Activated naive CD4-positive, alpha-beta T cell treated with anti-CD3 and anti-CD28 coated beads, Interleukin-2, amount 10 ng/mL, durations not matched to agents 7 days and 5 days (primary cell): ENCODE measurements at regions of chr3 and their contacts with region 1.

Region 1: DNA sequence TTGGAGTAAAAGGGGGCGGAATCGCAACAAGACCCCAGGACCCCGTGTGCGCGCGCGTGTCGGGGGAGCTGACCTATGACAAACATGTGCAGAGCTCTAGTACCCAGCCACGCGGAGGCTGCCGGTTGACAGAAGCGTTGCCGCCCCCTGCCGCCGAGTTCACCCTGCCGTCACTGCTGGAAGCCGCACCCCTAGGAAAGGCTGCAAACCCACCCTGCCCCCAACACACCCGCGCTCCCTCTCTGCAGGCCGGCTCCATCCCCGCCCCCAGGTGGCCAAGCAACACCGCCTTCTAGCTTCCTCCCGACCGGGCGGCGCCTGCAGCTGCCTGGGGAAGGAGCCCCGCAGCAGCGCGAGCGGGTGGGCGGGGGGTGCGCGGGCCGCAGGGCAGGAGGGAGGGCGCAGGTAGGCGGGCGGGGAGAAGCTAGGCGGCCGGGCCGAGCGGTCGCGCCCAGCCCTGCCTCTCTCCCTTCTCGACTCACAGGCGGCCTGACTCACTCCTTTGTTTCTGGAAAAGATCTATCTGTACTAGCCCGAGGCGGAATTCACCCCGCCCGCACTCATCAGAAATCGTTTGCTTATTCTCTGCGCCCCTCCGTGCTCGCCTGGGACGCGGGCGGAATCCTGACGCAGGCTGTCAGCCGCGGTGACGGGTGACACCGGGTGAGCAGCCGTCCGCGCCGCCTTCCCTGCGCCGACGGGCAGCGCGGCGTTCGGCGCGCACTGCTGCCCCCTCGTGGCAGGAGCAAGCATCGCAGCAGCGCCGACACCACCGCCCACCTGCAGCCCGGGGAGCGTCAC is 160.8 kb downstream of the GAP43 start:
- DNase-seq: peak; percentile 95
- H3K4me3 Mint-ChIP-seq: peak overlapping the region; percentile 83
- H3K27ac Mint-ChIP-seq: peak overlapping the region; percentile 97
- H3K4me1 Mint-ChIP-seq: peaks cover 17% of the 10 kb centered on the region
- H3K27me3 Mint-ChIP-seq: peaks cover 13% of the 10 kb centered on the region

Region 2: DNA sequence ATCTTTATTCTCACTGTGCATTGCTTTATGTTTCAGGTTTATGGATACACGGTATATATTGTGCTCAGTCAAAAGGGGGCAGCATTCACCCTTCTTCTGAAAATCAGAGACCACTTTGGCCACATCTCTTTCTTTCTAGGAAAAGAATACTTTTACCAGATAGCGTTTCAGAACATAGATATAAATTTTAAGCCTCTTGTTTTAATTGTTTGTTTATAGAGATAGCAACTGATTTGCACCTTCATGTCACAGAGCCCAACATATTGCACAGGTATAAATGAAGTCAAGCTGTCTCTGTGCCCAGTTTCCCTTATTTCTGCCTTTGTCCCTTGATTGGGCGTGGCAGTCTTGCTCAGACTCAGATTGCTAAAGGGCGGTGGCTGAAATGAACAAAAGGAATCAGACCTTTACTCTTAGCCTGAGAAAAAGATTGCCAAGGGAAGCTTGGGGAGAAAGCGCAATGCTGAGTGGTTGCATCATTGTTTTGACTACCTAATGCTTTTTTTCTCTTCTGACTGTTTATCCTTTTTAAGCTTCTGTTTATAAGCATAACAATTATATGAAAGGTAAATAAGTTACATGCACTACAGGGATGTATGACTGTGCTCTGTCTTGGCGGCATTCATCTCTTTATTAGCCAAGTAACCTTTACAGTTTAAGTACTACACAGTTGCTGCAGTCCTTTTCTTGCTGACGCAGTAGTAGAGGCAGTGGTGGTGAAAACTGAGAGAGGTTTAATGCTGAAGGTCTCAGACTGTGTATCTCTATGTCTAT is 566.3 kb before region 1 on chr3:
- CTCF ChIA-PET with region 1: interaction called, 13 read pairs
- DNase-seq: no peak
- H3K4me3 Mint-ChIP-seq: no peak overlapping the region
- H3K27ac Mint-ChIP-seq: no peak overlapping the region
- H3K4me1 Mint-ChIP-seq: no peaks in the 10 kb centered on the region
- H3K27me3 Mint-ChIP-seq: no peaks in the 10 kb centered on the region

Region 3: GRCh38 chr3:115814778-115815380 is 30.7 kb after region 1 on chr3:
- CTCF ChIA-PET with region 1: interaction called, 26 read pairs
- DNase-seq: peak; percentile 75
- H3K4me3 Mint-ChIP-seq: no peak overlapping the region
- H3K27ac Mint-ChIP-seq: no peak overlapping the region
- H3K4me1 Mint-ChIP-seq: no peaks in the 10 kb centered on the region
- H3K27me3 Mint-ChIP-seq: peaks cover 10% of the 10 kb centered on the region

Region 4: DNA sequence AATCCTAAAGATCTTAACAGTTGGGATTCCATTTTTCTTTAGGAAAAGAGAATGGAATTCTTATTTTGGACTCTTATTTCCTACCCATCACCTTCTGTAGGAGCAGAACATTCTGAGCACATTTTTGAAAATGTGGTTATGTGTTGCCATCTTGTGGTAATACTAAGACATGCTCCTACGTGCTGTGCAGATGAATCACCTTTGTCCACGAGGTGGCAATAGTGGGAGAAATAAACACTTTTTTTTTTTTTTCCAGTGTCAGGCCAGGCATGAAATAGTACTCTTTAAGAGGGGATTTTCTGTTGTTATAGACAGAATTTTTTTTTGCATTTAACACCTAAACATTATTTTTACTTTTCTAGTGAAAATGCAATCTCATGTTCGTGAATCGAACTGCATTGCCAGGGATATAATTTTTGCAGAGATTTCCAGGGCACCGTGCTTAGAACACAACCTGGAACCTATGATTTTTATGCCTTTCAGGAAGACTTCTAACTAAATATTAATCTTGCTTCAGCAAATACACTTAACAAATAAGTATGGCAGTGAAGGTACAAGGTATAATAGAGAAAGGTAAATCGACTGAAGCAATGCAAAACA is 35.7 kb after region 1 on chr3:
- CTCF ChIA-PET with region 1: interaction called, 26 read pairs
- DNase-seq: peak; percentile 75
- H3K4me3 Mint-ChIP-seq: no peak overlapping the region
- H3K27ac Mint-ChIP-seq: no peak overlapping the region
- H3K4me1 Mint-ChIP-seq: no peaks in the 10 kb centered on the region
- H3K27me3 Mint-ChIP-seq: peaks cover 7% of the 10 kb centered on the region